ENCODE measurements at regions of chr1 and their contacts with region 1.

Region 1: DNA sequence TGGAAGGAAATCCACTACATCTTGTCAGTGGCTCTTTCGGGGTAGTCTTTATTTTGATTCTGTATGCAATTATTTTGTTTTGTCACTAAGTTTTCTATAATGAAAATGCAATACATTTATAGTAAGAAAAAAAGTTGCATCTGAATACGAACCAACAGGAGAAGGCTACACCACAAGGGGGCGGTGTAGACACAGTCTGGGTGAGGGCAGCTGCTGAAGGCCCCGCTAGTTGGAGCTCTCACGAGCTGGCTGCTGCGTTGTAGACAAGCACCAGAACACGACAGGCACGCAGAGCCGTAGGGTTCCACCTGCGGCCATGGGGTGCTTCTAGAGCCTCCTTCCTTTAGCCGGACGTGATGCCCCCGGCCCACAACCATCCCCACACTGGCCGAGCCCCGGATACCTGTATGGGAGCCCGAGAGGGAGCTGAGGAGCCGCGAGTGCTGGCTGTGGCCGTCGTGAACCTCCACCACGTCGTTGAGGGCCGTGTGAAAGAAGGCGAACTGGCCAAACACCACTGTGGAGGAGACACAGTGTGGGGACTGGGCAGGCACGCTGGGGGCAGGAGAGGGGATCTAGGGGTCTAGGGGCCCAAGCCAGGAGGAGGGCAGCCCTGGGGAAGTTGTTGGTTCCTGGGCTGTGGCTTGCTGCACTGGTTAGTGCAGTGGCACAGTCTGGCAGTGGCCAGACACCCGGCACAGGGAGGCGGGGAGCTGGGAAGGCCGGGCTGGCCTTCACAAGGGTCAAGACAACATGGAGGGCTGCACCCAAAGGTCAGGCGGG is 160.8 kb downstream of the ZSCAN20 start:
- DNase-seq: peak; percentile 92
- ATAC-seq: peak; percentile 86 to 88

Region 2: GRCh38 chr1:34164771-34165391 is 531.7 kb after region 1 on chr1 and contains the start of gene CSMD2:
- intact Hi-C with region 1: loop called in 1 of 2 experiments (anchors 5 kb)
- DNase-seq: peak; percentile 58
- ATAC-seq: peak in 1 of 2 donors; percentile 22
- total RNA-seq, gene CSMD2: 0.29 to 0.58 TPM

Region 3: DNA sequence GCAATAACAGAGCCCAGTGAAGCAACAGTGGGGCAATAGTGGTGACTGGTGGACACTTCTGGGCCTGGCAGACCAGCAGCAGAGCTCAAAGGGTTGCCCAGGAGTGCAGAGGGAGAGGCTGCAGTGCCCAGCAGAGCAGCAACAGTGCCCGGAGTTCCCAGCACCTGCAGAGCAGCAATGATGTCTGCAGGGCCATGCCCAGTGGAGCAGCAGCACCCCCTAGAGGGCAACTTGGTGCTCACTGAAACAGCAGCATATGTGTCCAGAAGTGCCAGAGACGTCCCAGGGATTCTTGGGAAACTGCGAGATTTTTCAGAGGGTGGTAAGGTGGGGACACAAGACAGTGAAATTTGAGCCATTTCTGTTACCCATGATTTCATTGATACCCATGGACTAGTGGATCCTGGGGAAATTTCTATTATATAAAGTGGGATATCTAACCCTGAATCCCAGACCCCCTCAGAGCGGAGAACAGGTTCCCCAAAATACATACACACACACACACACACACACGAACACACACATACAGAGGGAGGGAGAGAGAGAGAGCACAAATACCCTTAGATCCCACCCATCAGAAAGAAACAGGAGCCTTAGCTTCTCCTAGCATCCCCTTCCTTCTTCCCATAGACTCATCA is 964.8 kb after region 1 on chr1:
- intact Hi-C with region 1: loop called in 1 of 2 experiments (anchors 5 kb)
- DNase-seq: peak; percentile 53
- ATAC-seq: peak; percentile 44 to 64

Measured in left cardiac atrium (tissue), 4 donors.